Calu3 (cell line): ENCODE measurements at regions of chr12 and their contacts with region 1.

Region 1: DNA sequence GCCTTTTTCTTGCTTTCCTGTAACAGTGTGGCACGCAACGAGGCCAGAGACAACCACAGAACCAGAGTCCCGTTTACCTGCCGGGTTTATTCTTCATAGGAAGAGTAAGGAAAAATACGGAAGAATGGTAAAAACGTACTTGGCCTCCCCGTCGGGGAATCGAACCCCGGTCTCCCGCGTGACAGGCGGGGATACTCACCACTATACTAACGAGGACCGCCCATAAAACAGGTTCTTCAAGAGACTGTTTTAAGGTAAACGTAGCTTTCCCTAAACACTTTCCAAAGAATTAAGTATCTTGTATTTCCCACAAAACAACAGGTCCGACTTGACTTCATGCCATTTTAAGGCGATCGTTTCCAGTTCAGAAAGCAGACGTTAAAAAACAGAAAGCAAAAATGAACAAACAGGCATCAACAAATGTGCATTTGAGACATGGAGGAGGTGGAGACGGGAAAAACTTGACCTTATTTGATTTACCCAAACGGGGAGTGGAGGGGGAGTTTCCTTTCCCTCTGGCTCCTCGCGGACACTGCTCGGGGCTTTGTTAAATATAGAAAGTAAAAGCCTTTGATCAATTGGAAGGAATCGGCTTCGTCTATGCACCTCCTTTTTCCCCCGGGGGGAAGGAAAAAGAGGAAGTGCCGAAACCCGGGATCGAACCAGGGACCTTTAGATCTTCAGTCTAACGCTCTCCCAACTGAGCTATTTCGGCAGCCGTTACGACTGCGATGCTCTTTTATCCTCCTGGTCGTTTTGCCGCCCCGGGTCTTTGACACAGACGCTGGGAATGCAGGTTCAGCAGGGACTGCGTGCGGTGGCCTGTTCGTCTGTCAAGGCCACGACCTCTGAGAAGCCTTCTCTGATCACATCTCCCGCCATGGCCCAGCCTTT is 13.0 kb upstream of the UBC start:
- DNase-seq: peak; percentile 95
- H3K4me3 Mint-ChIP-seq: peak overlapping the region; percentile 69
- H3K27ac Mint-ChIP-seq: peak overlapping the region; percentile 100
- H3K4me1 Mint-ChIP-seq: peaks cover 37% of the 10 kb centered on the region
- H3K27me3 Mint-ChIP-seq: peaks cover 16% of the 10 kb centered on the region
- CTCF ChIP-seq: no peak

Region 2: GRCh38 chr12:124940549-124941527 is 13.4 kb after region 1 on chr12:
- CTCF ChIA-PET with region 1: interaction called, 13 read pairs
- intact Hi-C with region 1: loop called (anchors 1 kb)
- DNase-seq: peak; percentile 93
- H3K4me3 Mint-ChIP-seq: no peak overlapping the region
- H3K27ac Mint-ChIP-seq: no peak overlapping the region
- H3K4me1 Mint-ChIP-seq: peaks cover 17% of the 10 kb centered on the region
- H3K27me3 Mint-ChIP-seq: no peaks in the 10 kb centered on the region
- CTCF ChIP-seq: peak; percentile 80

Region 3: GRCh38 chr12:125159683-125160082 is 232.2 kb after region 1 on chr12:
- CTCF ChIA-PET with region 1: no interaction called
- intact Hi-C with region 1: no loop called
- DNase-seq: no peak
- H3K4me3 Mint-ChIP-seq: no peak overlapping the region
- H3K27ac Mint-ChIP-seq: no peak overlapping the region
- H3K4me1 Mint-ChIP-seq: peaks cover 12% of the 10 kb centered on the region
- H3K27me3 Mint-ChIP-seq: peaks cover 8% of the 10 kb centered on the region
- CTCF ChIP-seq: no peak